BJ (cell line): ENCODE measurements at regions of chr3 and their contacts with region 1.

Region 1: GRCh38 chr3:192481638-192482037 is 245.7 kb downstream of the FGF12 start:
- DNase-seq: no peak
- H3K4me3 ChIP-seq: no peak overlapping the region
- H3K27me3 ChIP-seq: no peaks in the 10 kb centered on the region
- CTCF ChIP-seq: no peak

Region 2: GRCh38 chr3:192395506-192395905 is 86.1 kb before region 1 on chr3:
- CTCF ChIA-PET with region 1: no interaction called
- POLR2A ChIA-PET with region 1: no interaction called
- DNase-seq: no peak
- H3K4me3 ChIP-seq: no peak overlapping the region
- H3K27me3 ChIP-seq: no peaks in the 10 kb centered on the region
- CTCF ChIP-seq: no peak

Region 3: GRCh38 chr3:192467230-192468140 is 14.2 kb before region 1 on chr3:
- CTCF ChIA-PET with region 1: interaction called, 10 read pairs
- POLR2A ChIA-PET with region 1: no interaction called
- DNase-seq: no peak
- H3K4me3 ChIP-seq: no peak overlapping the region
- H3K27me3 ChIP-seq: no peaks in the 10 kb centered on the region
- CTCF ChIP-seq: peak; percentile 87